Esophagus squamous epithelium (tissue), 5 donors: ENCODE measurements at regions of chr6 and their contacts with region 1.

Region 1: DNA sequence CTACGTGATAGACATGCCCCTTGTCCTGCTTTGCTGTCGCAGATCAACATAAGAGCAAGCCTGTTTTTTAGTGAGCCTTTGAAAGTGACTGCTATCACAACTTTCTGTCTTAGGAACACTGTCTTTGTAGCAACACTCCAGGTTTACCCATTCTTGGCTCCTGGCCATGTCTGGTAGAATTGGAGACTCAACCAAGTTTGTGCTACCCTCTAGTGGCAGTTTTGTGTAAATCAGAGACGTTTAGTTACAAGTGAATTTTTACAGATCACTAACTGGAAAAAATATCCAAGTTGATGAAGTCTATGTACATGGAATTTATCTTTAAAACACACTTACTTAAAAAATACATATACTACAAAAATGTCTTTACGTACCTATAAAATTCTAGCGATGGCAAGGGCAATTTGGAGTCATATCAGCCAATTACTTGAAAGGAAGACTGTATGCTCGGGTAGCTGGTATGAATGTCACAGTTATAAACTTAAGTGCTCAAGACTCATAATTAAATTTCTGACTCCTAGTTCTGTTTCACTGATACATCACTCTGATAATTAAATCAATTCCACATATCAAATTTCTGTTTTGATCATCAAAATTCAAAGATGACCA is 101.4 kb downstream of the ADGB start:
- DNase-seq: peak; percentile 2
- H3K4me3 ChIP-seq: no peak overlapping the region
- H3K27ac ChIP-seq: no peak overlapping the region
- H3K4me1 ChIP-seq: no peaks in the 10 kb centered on the region
- H3K27me3 ChIP-seq: no peaks in the 10 kb centered on the region
- CTCF ChIP-seq: peak in 5 of 6 experiments; percentile 59 to 79 (median 65)
- POLR2A ChIP-seq: no peak

Region 2: DNA sequence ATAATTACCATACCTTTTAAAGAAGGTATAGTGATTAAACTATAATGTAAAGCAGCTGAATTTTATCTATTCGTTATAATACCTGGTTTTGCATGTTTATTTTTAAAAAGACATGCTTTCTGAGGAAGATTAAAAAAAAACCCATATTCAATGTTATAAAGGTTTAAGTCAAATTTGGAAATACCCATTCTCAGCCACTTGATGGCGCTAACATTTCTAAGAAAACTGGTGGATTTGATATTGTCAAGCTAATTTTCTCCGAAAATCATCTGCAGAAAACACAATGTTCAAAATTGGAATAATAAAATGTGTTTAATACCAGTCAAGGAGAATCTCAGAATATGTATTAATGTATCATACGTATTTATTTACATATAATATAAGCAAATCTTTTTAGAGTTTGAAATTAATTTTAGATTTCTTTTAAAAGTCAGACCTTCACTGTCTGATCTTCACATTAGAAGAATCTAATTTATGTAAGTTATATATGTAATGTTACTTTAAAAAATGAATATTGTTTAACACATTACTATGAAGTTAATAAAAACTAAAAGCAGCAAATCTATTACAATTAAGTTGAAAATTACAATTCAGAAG is 771.0 kb before region 1 on chr6:
- intact Hi-C with region 1: loop called (anchors 10 kb)
- DNase-seq: no peak
- H3K4me3 ChIP-seq: no peak overlapping the region
- H3K27ac ChIP-seq: no peak overlapping the region
- H3K4me1 ChIP-seq: no peaks in the 10 kb centered on the region
- H3K27me3 ChIP-seq: no peaks in the 10 kb centered on the region
- CTCF ChIP-seq: peak; percentile 30 to 66 (median 50)
- POLR2A ChIP-seq: no peak

Region 3: DNA sequence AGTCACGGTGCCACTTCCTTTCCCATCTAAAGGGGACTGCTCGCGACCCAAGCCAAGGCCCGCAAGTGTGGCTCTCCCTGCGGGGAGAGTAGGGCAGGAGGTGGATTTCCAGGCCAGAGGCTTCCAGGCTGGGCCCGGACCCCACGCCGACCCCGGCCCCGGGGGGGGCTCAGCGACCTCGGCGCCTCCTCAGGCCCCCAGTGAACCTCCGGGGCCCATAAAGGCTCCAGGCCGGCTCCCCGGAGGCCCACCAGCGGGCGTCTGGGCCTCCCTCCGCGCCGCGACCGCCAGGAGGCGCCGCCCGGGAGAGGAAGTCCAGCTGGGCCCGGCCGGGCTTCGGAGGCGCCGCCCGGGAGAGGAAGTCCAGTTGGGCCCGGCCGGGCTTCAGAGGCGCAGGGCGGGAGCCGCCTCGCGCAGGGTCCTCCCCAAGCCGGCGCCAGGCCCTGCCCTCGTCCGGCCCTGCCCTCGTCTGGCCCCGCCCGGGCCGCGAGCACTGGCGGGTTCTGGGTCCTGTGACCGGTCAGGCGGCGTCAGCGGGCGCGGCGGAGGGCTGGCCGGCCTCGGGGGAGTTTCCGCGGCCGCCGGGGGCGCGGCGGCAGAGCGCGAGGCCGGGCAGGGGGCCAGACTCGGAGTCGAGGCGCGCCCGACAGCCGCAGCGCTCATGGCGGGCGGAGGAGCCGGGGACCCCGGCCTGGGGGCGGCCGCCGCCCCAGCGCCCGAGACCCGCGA is 156.8 kb before region 1 on chr6 and contains the start of gene RAB32:
- intact Hi-C with region 1: loop called (anchors 10 kb)
- DNase-seq: peak; percentile 28
- H3K4me3 ChIP-seq: peak within 1 kb of the TSS; percentile 46 to 81 (median 60)
- H3K27ac ChIP-seq: peak within 1 kb of the TSS; percentile 82 to 98 (median 92)
- H3K4me1 ChIP-seq: peaks cover 13 to 46% (median 16%) of the 10 kb centered on the region in 3 donors
- H3K27me3 ChIP-seq: peaks cover 0 to 24% (median 0%) of the 10 kb centered on the region in 4 donors
- CTCF ChIP-seq: peak in 5 of 6 experiments; percentile 57 to 71 (median 68)
- POLR2A ChIP-seq: peak in 2 of 4 donors; percentile 68 to 75
- total RNA-seq, gene RAB32: 0.34 to 18.3 (median 5.5) TPM